Psoas muscle (tissue), 8 donors: ENCODE measurements at regions of chr10 and their contacts with region 1.

Region 1: GRCh38 chr10:75019370-75019769 is 92.1 kb upstream of the SAMD8 start:
- DNase-seq: no peak
- ATAC-seq: no peak
- H3K4me3 ChIP-seq: no peak overlapping the region
- H3K27ac ChIP-seq: no peak overlapping the region
- H3K4me1 ChIP-seq: peaks cover 19% of the 10 kb centered on the region
- H3K27me3 ChIP-seq: no peaks in the 10 kb centered on the region
- CTCF ChIP-seq: peak; percentile 21

Region 2: GRCh38 chr10:74262856-74263255 is 756.5 kb before region 1 on chr10:
- intact Hi-C with region 1: loop called (anchors 5 kb)
- DNase-seq: no peak
- ATAC-seq: no peak
- H3K4me3 ChIP-seq: no peak overlapping the region
- H3K27ac ChIP-seq: no peak overlapping the region
- H3K4me1 ChIP-seq: no peaks in the 10 kb centered on the region
- H3K27me3 ChIP-seq: no peaks in the 10 kb centered on the region
- CTCF ChIP-seq: no peak

Region 3: DNA sequence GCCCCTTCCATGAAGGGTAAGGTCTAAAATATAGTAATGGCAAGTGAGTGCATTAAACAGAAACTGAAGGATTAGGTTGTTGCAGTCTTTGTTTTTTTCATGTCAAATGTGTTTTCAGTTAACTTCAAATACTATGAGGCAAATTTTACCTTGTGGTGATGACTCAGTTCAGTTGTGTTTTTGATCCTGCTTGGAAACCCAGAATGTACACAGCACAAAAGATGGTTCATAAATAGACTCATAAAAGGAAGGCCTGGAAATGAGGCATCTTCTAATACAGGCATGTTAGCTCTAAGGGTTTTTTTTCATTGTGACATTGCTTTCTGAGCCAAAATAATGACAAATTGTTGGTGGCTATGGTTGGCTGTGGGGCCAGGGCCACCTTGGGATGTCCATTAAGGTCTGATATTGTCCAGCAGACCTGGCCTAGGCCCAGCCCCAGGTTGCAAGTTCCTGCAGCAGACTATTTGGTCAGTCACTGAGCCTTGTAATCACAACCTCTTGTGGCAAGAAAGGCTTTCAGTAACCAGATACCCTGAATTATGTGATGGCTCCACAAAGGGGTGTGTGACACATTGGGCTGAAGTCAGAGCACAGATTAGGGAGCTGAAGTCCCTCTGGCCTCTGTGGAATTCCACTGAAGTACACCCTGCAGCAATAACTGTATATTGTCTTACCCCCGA is 23.1 kb after region 1 on chr10:
- intact Hi-C with region 1: loop called in 1 of 2 experiments (anchors 1 kb)
- DNase-seq: peak; percentile 53 to 83
- ATAC-seq: peak; percentile 92 to 95 (median 94)
- H3K4me3 ChIP-seq: no peak overlapping the region
- H3K27ac ChIP-seq: peak overlapping the region; percentile 87
- H3K4me1 ChIP-seq: peaks cover 50% of the 10 kb centered on the region
- H3K27me3 ChIP-seq: no peaks in the 10 kb centered on the region
- CTCF ChIP-seq: no peak